ENCODE measurements at regions of chr19 and their contacts with region 1.

Region 1: GRCh38 chr19:18408053-18408476 is 10.6 kb upstream of the LRRC25 start:
- DNase-seq: peak in 2 of 3 donors; percentile 55 to 61
- ATAC-seq: peak; percentile 59 to 77 (median 68)
- H3K4me3 ChIP-seq: no peak overlapping the region
- H3K27ac ChIP-seq: no peak overlapping the region
- H3K4me1 ChIP-seq: peaks cover 0 to 3% (median 0%) of the 10 kb centered on the region in 4 donors
- H3K27me3 ChIP-seq: no peaks in the 10 kb centered on the region
- CTCF ChIP-seq: peak; percentile 42 to 64 (median 49)
- POLR2A ChIP-seq: no peak

Region 2: GRCh38 chr19:18254546-18255503 is 153.2 kb before region 1 on chr19:
- intact Hi-C with region 1: no loop called
- DNase-seq: no peak
- ATAC-seq: peak in 1 of 4 donors; percentile 12
- H3K4me3 ChIP-seq: no peak overlapping the region
- H3K27ac ChIP-seq: no peak overlapping the region
- H3K4me1 ChIP-seq: no peaks in the 10 kb centered on the region
- H3K27me3 ChIP-seq: no peaks in the 10 kb centered on the region
- CTCF ChIP-seq: peak in 1 of 4 donors; percentile 6
- POLR2A ChIP-seq: no peak

Region 3: GRCh38 chr19:18340190-18340989 is 67.7 kb before region 1 on chr19 and contains the start of gene PGPEP1:
- intact Hi-C with region 1: loop called in 1 of 2 experiments (anchors 5 kb)
- DNase-seq: peak; percentile 76 to 89 (median 80)
- ATAC-seq: peak; percentile 73 to 87 (median 81)
- H3K4me3 ChIP-seq: peak within 1 kb of the TSS; percentile 96 to 98 (median 97)
- H3K27ac ChIP-seq: peak within 1 kb of the TSS; percentile 83 to 88 (median 87)
- H3K4me1 ChIP-seq: peaks cover 0 to 33% (median 8%) of the 10 kb centered on the region in 4 donors
- H3K27me3 ChIP-seq: no peaks in the 10 kb centered on the region
- CTCF ChIP-seq: no peak
- POLR2A ChIP-seq: peak; percentile 52
- total RNA-seq, gene PGPEP1: 33.0 to 55.5 (median 40.7) TPM

Region 4: GRCh38 chr19:18464646-18465045 is 56.6 kb after region 1 on chr19:
- intact Hi-C with region 1: no loop called
- DNase-seq: peak; percentile 78 to 95 (median 88)
- ATAC-seq: peak; percentile 65 to 78 (median 74)
- H3K4me3 ChIP-seq: no peak overlapping the region
- H3K27ac ChIP-seq: peak overlapping the region; percentile 11 to 70 (median 47)
- H3K4me1 ChIP-seq: peaks cover 0 to 43% (median 20%) of the 10 kb centered on the region in 4 donors
- H3K27me3 ChIP-seq: no peaks in the 10 kb centered on the region
- CTCF ChIP-seq: no peak
- POLR2A ChIP-seq: peak; percentile 22